GM12878 (cell line): ENCODE measurements at regions of chr6 and their contacts with region 1.

Region 1: DNA sequence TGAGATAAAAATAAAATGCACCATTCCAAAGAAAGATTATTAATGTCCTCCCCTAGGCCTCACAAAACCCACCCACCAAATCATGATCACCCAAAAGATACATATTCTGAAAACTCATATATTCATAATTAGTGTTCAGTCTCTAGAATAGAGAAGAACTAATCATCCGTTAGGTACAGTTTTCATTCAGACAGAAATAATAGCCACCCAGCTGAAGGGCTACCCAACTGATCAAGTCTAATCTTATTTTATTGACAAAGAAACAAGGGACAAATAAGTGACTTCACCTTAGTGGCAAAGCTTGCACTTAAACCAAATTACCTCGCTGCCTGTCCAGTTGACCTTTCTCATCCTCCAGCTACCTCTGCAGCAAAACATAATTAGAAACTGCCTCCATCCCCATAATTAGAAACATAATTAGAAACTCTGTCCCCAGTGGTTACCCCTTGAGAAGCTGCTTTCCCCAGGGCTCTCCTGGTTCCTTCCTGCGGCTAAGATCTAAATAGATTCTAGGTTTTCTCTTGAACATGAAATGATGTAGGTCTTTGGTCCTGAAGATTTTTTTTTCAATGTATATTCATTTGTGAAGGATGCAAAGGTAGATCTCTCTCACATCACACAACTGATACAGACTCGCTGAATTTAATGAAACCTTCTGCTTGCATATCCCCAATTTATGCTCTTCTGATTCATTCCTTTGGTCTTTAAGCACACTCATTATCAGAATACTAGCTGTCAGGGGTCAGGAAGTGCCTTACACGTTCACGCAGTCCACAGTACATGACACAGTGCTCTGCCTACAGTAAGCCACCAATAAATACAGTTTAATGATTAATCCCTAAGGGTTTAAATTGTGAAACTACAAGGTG is 46.3 kb downstream of the HBS1L start:
- DNase-seq: peak; percentile 56
- ATAC-seq: peak; percentile 91
- H3K4me3 ChIP-seq: 0 out of 2 replicates have a peak overlapping the region, but pooled peaks have one; percentile 16
- H3K27ac ChIP-seq: peak overlapping the region; percentile 64
- H3K4me1 ChIP-seq: peaks cover 28% of the 10 kb centered on the region
- H3K27me3 ChIP-seq: no peaks in the 10 kb centered on the region
- CTCF ChIP-seq: no peak
- EP300 ChIP-seq: peak; percentile 43 to 66; a peak in 2 of 4 replicates
- POLR2A ChIP-seq: no peak
- RAD21 ChIP-seq: no peak

Region 2: GRCh38 chr6:134995536-134995935 is 12.8 kb before region 1 on chr6:
- CTCF ChIA-PET with region 1: interaction called, 7 read pairs
- POLR2A ChIA-PET with region 1: interaction called, 3 read pairs
- RAD21 ChIA-PET with region 1: no interaction called
- SMC1A ChIA-PET with region 1: interaction called, 22 read pairs
- in situ Hi-C with region 1: no loop called
- intact Hi-C with region 1: no loop called
- DNase-seq: no peak
- ATAC-seq: no peak
- H3K4me3 ChIP-seq: no peak overlapping the region
- H3K27ac ChIP-seq: no peak overlapping the region
- H3K4me1 ChIP-seq: no peaks in the 10 kb centered on the region; the same call in 1 of the 2 replicates
- H3K27me3 ChIP-seq: no peaks in the 10 kb centered on the region
- CTCF ChIP-seq: no peak
- EP300 ChIP-seq: no peak
- POLR2A ChIP-seq: no peak
- RAD21 ChIP-seq: no peak

Region 3: DNA sequence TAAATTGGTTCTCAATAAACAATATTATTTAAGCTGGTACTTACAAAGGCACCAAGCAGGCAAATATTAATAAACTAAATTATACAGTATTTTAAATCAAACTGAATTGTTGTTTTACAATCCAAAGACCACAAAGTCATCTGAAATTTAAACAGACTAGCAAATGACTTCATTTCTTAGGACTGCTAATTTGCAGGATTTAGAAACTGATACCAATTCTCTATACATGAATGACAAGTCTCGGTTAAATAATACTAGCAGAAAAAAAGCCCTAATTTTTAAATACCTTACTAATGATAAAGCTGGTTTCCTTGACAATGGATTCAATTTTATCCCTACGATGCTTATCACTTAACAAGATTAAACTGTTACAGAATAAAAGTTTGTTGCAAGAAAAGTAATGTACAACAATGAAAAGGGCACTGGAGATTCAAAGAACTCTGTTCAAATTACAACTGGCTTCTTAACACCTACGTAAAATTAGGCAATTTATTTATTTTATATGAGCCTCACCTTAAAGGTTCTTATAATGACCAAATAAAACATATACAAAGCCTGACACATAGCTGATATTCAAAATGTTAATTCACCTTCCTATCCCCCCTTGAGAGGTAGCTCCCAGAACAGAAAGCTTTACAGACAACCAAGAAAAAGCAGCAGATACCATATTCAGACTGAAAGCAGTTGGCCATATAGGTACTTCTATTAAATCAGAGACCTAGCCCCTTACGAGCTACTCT is 13.2 kb after region 1 on chr6:
- CTCF ChIA-PET with region 1: interaction called, 17 read pairs
- POLR2A ChIA-PET with region 1: interaction called, 18 read pairs
- RAD21 ChIA-PET with region 1: interaction called, 41 read pairs
- SMC1A ChIA-PET with region 1: interaction called, 45 read pairs
- in situ Hi-C with region 1: no loop called
- intact Hi-C with region 1: no loop called
- DNase-seq: no peak
- ATAC-seq: peak; percentile 91
- H3K4me3 ChIP-seq: 0 out of 2 replicates have a peak overlapping the region, but pooled peaks have one; percentile 13
- H3K27ac ChIP-seq: peak overlapping the region; percentile 54; the same call in 1 of the 2 replicates
- H3K4me1 ChIP-seq: peaks cover 12% of the 10 kb centered on the region; the same call in 1 of the 2 replicates
- H3K27me3 ChIP-seq: no peaks in the 10 kb centered on the region
- CTCF ChIP-seq: no peak
- EP300 ChIP-seq: peak in 1 of 2 experiments; percentile 26; a peak in 1 of 4 replicates
- POLR2A ChIP-seq: no peak
- RAD21 ChIP-seq: no peak

Region 4: DNA sequence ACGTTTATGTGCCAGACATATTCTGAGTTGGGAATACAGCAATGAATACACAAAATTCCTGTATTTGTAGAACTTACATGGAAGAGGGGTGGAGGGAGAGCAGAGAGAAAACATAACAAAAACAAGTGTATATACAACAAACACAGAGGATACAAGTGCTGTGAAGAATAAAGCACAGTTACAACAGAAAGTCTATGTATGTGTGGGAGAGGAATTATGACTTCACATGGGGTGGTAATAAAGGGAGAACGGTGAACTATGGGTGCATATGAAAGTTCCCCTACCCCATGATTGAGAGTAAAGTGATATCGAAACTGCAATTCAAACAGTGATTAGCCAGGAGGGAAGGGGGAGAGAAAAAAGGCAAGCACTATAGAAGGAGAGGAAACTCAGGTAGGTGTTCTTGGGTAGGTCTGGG is 21.8 kb after region 1 on chr6:
- CTCF ChIA-PET with region 1: interaction called, 4 read pairs
- POLR2A ChIA-PET with region 1: interaction called, 3 read pairs
- RAD21 ChIA-PET with region 1: interaction called, 11 read pairs
- SMC1A ChIA-PET with region 1: interaction called, 18 read pairs
- in situ Hi-C with region 1: no loop called
- intact Hi-C with region 1: loop called (anchors 2 kb)
- DNase-seq: peak; percentile 86
- ATAC-seq: peak; percentile 97
- H3K4me3 ChIP-seq: 0 out of 2 replicates have a peak overlapping the region, but pooled peaks have one; percentile 19
- H3K27ac ChIP-seq: peak overlapping the region; percentile 76
- H3K4me1 ChIP-seq: peaks cover 22% of the 10 kb centered on the region
- H3K27me3 ChIP-seq: no peaks in the 10 kb centered on the region
- CTCF ChIP-seq: no peak
- EP300 ChIP-seq: peak; percentile 84 to 86; a peak in 3 of 4 replicates
- POLR2A ChIP-seq: no peak
- RAD21 ChIP-seq: 0 out of 2 replicates have a peak, but pooled peaks have one; percentile 11

Region 5: DNA sequence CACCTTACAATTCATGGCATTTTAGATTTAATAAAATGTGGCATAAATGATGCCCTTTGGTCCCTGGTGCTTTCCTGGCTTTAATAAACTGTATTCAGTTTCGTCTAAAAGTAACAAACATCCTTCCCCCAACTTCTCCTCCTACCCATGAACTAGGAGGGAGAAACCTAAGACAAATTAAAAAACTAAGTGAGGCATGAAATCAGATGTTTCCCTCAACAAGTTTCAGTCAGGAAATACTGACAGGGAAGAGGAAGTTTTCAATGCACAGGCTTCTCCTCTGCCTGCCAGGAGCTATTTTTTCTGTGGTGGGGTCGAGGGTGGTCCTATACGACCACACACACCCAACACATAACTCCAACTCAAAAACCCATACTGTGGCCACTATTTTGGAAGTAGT is 36.3 kb after region 1 on chr6:
- CTCF ChIA-PET with region 1: interaction called, 5 read pairs
- POLR2A ChIA-PET with region 1: interaction called, 5 read pairs
- RAD21 ChIA-PET with region 1: interaction called, 13 read pairs
- SMC1A ChIA-PET with region 1: interaction called, 15 read pairs
- in situ Hi-C with region 1: no loop called
- intact Hi-C with region 1: no loop called
- DNase-seq: no peak
- ATAC-seq: peak; percentile 20
- H3K4me3 ChIP-seq: peak overlapping the region; percentile 6; the same call in 1 of the 2 replicates
- H3K27ac ChIP-seq: 0 out of 2 replicates have a peak overlapping the region, but pooled peaks have one; percentile 13
- H3K4me1 ChIP-seq: peaks cover 9% of the 10 kb centered on the region
- H3K27me3 ChIP-seq: no peaks in the 10 kb centered on the region
- CTCF ChIP-seq: no peak
- EP300 ChIP-seq: no peak
- POLR2A ChIP-seq: no peak
- RAD21 ChIP-seq: no peak

Region 6: DNA sequence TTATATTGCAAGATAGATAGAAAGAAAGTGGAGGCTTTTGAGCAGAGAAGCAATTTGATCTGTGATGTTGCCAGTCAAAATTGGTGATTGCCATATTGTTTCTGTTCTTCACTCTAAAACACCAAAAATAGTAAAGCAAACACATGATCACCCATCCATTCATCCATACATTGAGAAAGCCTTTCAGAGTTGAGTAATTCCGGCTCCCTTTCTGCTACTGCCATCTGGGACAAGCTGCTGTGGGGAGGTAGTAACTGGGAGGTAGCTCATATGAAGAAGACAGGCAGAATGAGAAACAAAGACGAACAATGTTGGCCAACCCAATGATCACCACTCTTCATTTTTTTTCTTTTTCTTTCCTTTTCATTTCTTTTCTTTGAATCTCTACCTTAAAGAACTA is 97.4 kb after region 1 on chr6:
- CTCF ChIA-PET with region 1: interaction called, 5 read pairs
- POLR2A ChIA-PET with region 1: interaction called, 5 read pairs
- RAD21 ChIA-PET with region 1: no interaction called
- SMC1A ChIA-PET with region 1: interaction called, 13 read pairs
- in situ Hi-C with region 1: no loop called
- intact Hi-C with region 1: loop called (anchors 10 kb)
- DNase-seq: no peak
- ATAC-seq: no peak
- H3K4me3 ChIP-seq: no peak overlapping the region
- H3K27ac ChIP-seq: no peak overlapping the region
- H3K4me1 ChIP-seq: peaks cover 3% of the 10 kb centered on the region
- H3K27me3 ChIP-seq: no peaks in the 10 kb centered on the region
- CTCF ChIP-seq: no peak
- EP300 ChIP-seq: no peak
- POLR2A ChIP-seq: no peak
- RAD21 ChIP-seq: no peak

Region 7: DNA sequence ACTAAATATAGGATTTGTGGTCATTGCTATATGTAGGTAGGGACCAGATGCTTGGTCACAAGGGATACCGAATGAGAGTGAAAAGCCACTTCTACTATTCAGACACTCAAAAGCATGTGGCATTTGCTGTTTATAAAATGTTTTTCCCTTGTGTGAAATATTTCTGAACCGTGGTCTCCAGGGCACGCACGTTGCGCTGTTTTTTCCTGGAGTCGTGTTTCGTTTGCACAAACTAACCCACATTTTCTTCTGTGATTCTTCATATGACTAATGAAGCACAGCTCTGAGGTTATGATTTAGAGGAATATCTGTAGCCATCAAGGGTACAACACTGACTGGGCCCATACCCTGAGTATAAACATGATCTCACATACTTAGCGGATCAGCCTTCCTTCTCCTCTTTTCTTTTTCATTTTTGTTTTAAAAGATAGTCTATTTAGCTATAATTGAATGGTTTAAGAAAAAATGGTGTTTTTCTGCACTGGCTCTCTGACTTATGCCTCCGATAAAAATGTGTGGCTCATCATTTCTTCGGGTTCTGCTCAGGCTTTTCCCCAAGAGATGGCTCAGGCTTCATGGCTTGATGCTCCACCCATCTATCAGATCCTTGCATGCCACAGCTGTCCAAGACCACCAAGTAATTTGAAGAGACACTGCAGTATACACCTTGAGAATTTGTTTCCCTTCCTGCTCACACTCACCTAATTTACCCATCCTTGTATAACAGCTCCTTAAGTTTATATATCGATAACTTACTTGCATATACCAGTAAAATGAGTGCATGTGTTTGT is 106.2 kb after region 1 on chr6:
- CTCF ChIA-PET with region 1: interaction called, 3 read pairs
- POLR2A ChIA-PET with region 1: no interaction called
- RAD21 ChIA-PET with region 1: interaction called, 5 read pairs
- SMC1A ChIA-PET with region 1: interaction called, 10 read pairs
- in situ Hi-C with region 1: no loop called
- intact Hi-C with region 1: loop called (anchors 10 kb)
- DNase-seq: peak; percentile 67
- ATAC-seq: peak; percentile 90
- H3K4me3 ChIP-seq: no peak overlapping the region; the same call in 1 of the 2 replicates
- H3K27ac ChIP-seq: peak overlapping the region; percentile 56
- H3K4me1 ChIP-seq: peaks cover 42% of the 10 kb centered on the region
- H3K27me3 ChIP-seq: no peaks in the 10 kb centered on the region
- CTCF ChIP-seq: no peak
- EP300 ChIP-seq: peak; percentile 97 to 98
- POLR2A ChIP-seq: no peak
- RAD21 ChIP-seq: no peak